Right cardiac atrium (tissue), 5 donors: ENCODE measurements at regions of chr1 and their contacts with region 1.

Region 1: GRCh38 chr1:89804642-89805237 is 16.1 kb upstream of the LRRC8D start:
- DNase-seq: peak; percentile 78 to 90 (median 84)
- ATAC-seq: peak; percentile 86 to 89
- H3K4me3 ChIP-seq: no peak overlapping the region
- H3K27ac ChIP-seq: no peak overlapping the region
- H3K4me1 ChIP-seq: no peaks in the 10 kb centered on the region
- H3K27me3 ChIP-seq: no peaks in the 10 kb centered on the region

Region 2: GRCh38 chr1:89833183-89834082 is 28.7 kb after region 1 on chr1:
- intact Hi-C with region 1: no loop called
- DNase-seq: peak in 1 of 3 donors; percentile 40
- ATAC-seq: peak in 1 of 2 donors; percentile 45
- H3K4me3 ChIP-seq: no peak overlapping the region
- H3K27ac ChIP-seq: no peak overlapping the region
- H3K4me1 ChIP-seq: peaks cover 4% of the 10 kb centered on the region
- H3K27me3 ChIP-seq: no peaks in the 10 kb centered on the region

Region 3: DNA sequence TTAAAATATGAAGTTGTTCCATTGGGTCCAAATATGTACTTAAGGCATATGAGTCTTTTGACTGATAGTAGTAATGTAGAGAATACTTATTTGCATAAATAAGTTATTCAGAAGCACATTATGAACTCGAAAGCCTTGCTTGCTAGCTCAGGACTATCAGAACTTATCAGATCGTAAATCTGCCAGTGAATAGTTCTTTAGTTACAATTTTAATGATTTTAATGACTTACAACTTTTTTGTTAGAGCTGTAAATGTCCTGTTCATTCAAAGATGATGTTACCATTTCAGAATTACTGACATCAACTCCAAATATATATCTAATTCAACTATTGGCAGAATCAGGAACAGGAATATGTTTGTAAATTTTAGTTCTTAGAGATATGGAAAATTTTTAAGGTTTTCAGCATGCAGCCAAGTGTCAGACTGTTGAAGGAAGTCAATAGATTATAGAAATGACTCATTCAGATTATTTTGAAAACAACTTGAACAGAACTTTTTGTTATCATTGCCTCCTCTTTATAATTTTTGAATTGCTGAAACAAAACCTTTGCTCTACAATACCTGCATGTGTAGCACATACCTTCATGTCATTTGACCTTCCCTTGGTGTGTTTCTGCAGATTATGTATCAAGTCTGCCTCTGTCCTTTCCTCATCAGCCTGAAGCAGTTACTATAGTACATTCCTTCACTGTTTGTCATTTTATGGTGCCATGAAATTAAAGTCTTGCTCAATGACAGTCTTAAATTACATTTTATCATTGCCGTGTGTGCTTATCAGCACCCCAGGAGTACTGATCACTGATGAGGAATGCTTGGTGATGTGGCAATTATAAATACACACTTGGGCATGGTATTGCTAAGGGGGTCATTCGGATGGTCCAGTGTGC is 61.0 kb after region 1 on chr1:
- intact Hi-C with region 1: no loop called
- DNase-seq: no peak
- ATAC-seq: peak; percentile 74 to 76
- H3K4me3 ChIP-seq: no peak overlapping the region
- H3K27ac ChIP-seq: no peak overlapping the region
- H3K4me1 ChIP-seq: peaks cover 4% of the 10 kb centered on the region
- H3K27me3 ChIP-seq: no peaks in the 10 kb centered on the region

Region 4: GRCh38 chr1:89987170-89987819 is 182.6 kb after region 1 on chr1:
- intact Hi-C with region 1: loop called (anchors 2 to 5 kb)
- DNase-seq: no peak
- ATAC-seq: peak; percentile 84 to 88
- H3K4me3 ChIP-seq: no peak overlapping the region
- H3K27ac ChIP-seq: no peak overlapping the region
- H3K4me1 ChIP-seq: no peaks in the 10 kb centered on the region
- H3K27me3 ChIP-seq: no peaks in the 10 kb centered on the region